GM12878 (cell line): ENCODE measurements at regions of chr10 and their contacts with region 1.

Region 1: DNA sequence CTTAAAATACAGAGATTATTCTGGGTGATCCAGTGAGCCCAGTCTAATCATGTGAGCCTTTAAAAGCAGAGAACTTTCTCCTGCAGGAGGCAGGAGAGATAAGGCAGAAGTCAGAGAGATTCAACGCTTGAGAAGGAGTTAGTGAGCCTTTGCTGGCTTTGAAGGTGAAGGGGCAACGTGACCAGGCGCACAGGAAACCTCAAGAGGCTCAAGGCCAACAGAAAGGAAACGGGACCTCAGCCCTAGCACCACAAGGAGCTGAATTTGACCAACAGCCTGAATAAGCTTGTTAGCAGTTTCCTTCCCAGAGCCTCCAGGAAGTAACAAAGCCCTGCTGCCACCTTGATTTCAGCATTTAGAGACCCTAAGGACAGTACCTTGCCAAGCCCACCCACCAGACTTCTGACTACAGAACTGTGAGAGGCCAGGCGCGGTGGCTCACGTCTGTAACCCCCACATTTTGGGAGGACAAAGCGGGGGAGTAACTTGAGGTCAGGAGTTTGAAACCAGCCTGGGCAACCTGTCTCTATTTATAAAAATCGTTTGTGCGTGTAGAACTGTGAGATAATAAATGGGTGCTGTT is 87.3 kb upstream of the KAT6B start:
- DNase-seq: peak; percentile 94
- ATAC-seq: peak; percentile 93
- H3K4me3 ChIP-seq: peak overlapping the region; percentile 42; the same call in 1 of the 2 replicates
- H3K27ac ChIP-seq: peak overlapping the region; percentile 97
- H3K4me1 ChIP-seq: peaks cover 24% of the 10 kb centered on the region
- H3K27me3 ChIP-seq: no peaks in the 10 kb centered on the region
- CTCF ChIP-seq: peak; percentile 48 to 61 (median 50)
- EP300 ChIP-seq: peak in 1 of 2 experiments; percentile 31; a peak in 2 of 4 replicates
- POLR2A ChIP-seq: no peak
- RAD21 ChIP-seq: peak; percentile 77

Region 2: GRCh38 chr10:74262856-74263255 is 476.2 kb before region 1 on chr10:
- CTCF ChIA-PET with region 1: interaction called, 6 read pairs
- POLR2A ChIA-PET with region 1: no interaction called
- RAD21 ChIA-PET with region 1: interaction called, 8 read pairs
- SMC1A ChIA-PET with region 1: interaction called, 12 read pairs
- in situ Hi-C with region 1: loop called (anchors 25 kb)
- intact Hi-C with region 1: loop called (anchors 1 kb)
- DNase-seq: no peak
- ATAC-seq: no peak
- H3K4me3 ChIP-seq: no peak overlapping the region
- H3K27ac ChIP-seq: no peak overlapping the region
- H3K4me1 ChIP-seq: no peaks in the 10 kb centered on the region
- H3K27me3 ChIP-seq: no peaks in the 10 kb centered on the region
- CTCF ChIP-seq: no peak
- EP300 ChIP-seq: no peak
- POLR2A ChIP-seq: no peak
- RAD21 ChIP-seq: no peak

Region 3: GRCh38 chr10:74589226-74589673 is 149.8 kb before region 1 on chr10:
- CTCF ChIA-PET with region 1: interaction called, 37 read pairs
- POLR2A ChIA-PET with region 1: interaction called, 3 read pairs
- RAD21 ChIA-PET with region 1: interaction called, 28 read pairs
- SMC1A ChIA-PET with region 1: interaction called, 39 read pairs
- in situ Hi-C with region 1: no loop called
- intact Hi-C with region 1: loop called (anchors 1 kb)
- DNase-seq: peak; percentile 82
- ATAC-seq: peak; percentile 75
- H3K4me3 ChIP-seq: no peak overlapping the region
- H3K27ac ChIP-seq: no peak overlapping the region
- H3K4me1 ChIP-seq: peaks cover 23% of the 10 kb centered on the region
- H3K27me3 ChIP-seq: no peaks in the 10 kb centered on the region
- CTCF ChIP-seq: no peak
- EP300 ChIP-seq: peak; percentile 80 to 92
- POLR2A ChIP-seq: no peak
- RAD21 ChIP-seq: no peak

Region 4: GRCh38 chr10:74683621-74684364 is 55.3 kb before region 1 on chr10:
- CTCF ChIA-PET with region 1: interaction called, 42 read pairs
- POLR2A ChIA-PET with region 1: interaction called, 4 read pairs
- RAD21 ChIA-PET with region 1: interaction called, 34 read pairs
- SMC1A ChIA-PET with region 1: interaction called, 53 read pairs
- in situ Hi-C with region 1: no loop called
- intact Hi-C with region 1: loop called (anchors 5 kb)
- DNase-seq: no peak
- ATAC-seq: peak; percentile 72
- H3K4me3 ChIP-seq: no peak overlapping the region; the same call in 1 of the 2 replicates
- H3K27ac ChIP-seq: peak overlapping the region; percentile 83
- H3K4me1 ChIP-seq: peaks cover 23% of the 10 kb centered on the region
- H3K27me3 ChIP-seq: no peaks in the 10 kb centered on the region
- CTCF ChIP-seq: no peak
- EP300 ChIP-seq: 0 out of 4 replicates have a peak, but pooled peaks of 1 of the 2 experiments have one; percentile 41
- POLR2A ChIP-seq: no peak
- RAD21 ChIP-seq: no peak

Region 5: GRCh38 chr10:74794531-74794930 is 55.5 kb after region 1 on chr10:
- CTCF ChIA-PET with region 1: interaction called, 15 read pairs
- POLR2A ChIA-PET with region 1: no interaction called
- RAD21 ChIA-PET with region 1: interaction called, 3 read pairs
- SMC1A ChIA-PET with region 1: interaction called, 11 read pairs
- in situ Hi-C with region 1: no loop called
- intact Hi-C with region 1: no loop called
- DNase-seq: no peak
- ATAC-seq: no peak
- H3K4me3 ChIP-seq: no peak overlapping the region
- H3K27ac ChIP-seq: no peak overlapping the region
- H3K4me1 ChIP-seq: peaks cover 18% of the 10 kb centered on the region
- H3K27me3 ChIP-seq: no peaks in the 10 kb centered on the region
- CTCF ChIP-seq: no peak
- EP300 ChIP-seq: no peak
- POLR2A ChIP-seq: no peak
- RAD21 ChIP-seq: no peak

Region 6: DNA sequence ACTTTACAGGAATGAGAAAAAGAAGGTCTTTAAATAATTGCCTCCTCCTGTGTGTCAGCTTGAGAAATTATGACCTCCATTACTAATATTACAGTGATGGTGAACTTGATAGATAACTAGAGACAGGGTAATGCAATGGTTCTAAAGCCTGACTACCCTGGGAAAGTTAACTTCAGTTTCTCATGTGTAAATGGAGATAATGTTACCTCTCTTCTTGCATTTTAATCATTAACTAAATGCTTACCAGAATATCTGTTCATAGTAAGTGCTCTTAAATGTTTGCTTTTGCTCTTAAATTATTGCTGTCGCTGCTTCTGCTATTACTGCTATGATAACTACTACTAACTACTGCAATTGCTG is 198.4 kb after region 1 on chr10:
- CTCF ChIA-PET with region 1: no interaction called
- POLR2A ChIA-PET with region 1: no interaction called
- RAD21 ChIA-PET with region 1: no interaction called
- SMC1A ChIA-PET with region 1: no interaction called
- in situ Hi-C with region 1: no loop called
- intact Hi-C with region 1: no loop called
- DNase-seq: no peak
- ATAC-seq: no peak
- H3K4me3 ChIP-seq: no peak overlapping the region
- H3K27ac ChIP-seq: no peak overlapping the region
- H3K4me1 ChIP-seq: no peaks in the 10 kb centered on the region
- H3K27me3 ChIP-seq: no peaks in the 10 kb centered on the region
- CTCF ChIP-seq: no peak
- EP300 ChIP-seq: no peak
- POLR2A ChIP-seq: no peak
- RAD21 ChIP-seq: no peak

Region 7: DNA sequence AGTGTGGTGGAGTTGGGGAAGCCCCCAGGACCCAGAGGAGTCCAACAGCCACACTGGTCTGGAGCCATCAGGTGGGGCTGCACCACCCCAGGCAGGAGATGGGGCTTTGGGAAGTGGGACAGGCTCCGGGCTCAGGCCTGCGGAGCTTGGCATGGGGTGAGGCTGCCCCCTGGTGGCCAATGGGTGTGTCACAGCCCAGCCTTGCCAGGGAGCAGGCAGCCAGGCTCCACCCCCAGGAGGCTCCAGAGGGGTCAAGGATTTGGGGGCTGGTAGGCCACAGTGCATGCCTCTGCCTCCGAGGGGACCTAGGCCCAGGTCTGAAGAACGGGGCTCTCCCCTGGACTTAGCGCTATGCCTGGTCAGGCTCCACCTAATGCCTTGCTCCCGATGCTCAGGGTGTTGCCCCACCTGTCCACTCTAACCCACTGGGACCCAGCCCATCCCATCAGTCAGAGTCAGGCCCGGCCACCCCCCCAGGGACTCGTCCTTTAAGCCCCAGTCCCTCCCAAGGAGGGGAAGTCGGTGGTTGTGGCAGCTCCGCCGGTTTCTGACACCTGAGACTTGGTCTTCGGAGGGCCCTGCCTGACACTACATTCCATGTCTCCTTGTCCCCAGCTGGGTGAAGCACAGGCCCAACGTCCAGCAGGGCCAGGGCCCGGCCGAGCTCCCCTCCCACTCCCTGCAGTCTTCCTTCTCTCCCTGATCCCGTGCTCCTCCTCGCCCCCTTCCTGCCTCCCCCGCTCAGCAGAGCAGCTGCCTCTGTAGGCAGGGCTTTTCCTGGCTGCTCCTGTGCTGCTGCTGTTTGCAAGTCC is 361.1 kb after region 1 on chr10:
- CTCF ChIA-PET with region 1: interaction called, 17 read pairs
- POLR2A ChIA-PET with region 1: interaction called, 6 read pairs
- RAD21 ChIA-PET with region 1: interaction called, 11 read pairs
- SMC1A ChIA-PET with region 1: interaction called, 6 read pairs
- in situ Hi-C with region 1: no loop called
- intact Hi-C with region 1: loop called (anchors 2 kb)
- DNase-seq: no peak
- ATAC-seq: peak; percentile 98
- H3K4me3 ChIP-seq: no peak overlapping the region
- H3K27ac ChIP-seq: no peak overlapping the region
- H3K4me1 ChIP-seq: no peaks in the 10 kb centered on the region; the same call in 1 of the 2 replicates
- H3K27me3 ChIP-seq: no peaks in the 10 kb centered on the region
- CTCF ChIP-seq: peak; percentile 94 to 99 (median 98)
- EP300 ChIP-seq: no peak
- POLR2A ChIP-seq: no peak
- RAD21 ChIP-seq: peak; percentile 98